Activated CD4-positive, alpha-beta memory T cell treated with anti-CD3 and anti-CD28 coated beads, Interleukin-2, amount 10 ng/mL, durations not matched to agents 7 days and 5 days (primary cell): ENCODE measurements at regions of chr1 and their contacts with region 1.

Region 1: GRCh38 chr1:202462342-202463076 is 114.0 kb downstream of the PPP1R12B start:
- DNase-seq: no peak
- H3K4me3 Mint-ChIP-seq: no peak overlapping the region
- H3K27ac Mint-ChIP-seq: no peak overlapping the region
- H3K4me1 Mint-ChIP-seq: no peaks in the 10 kb centered on the region
- H3K27me3 Mint-ChIP-seq: no peaks in the 10 kb centered on the region

Region 2: GRCh38 chr1:202105539-202106276 is 356.8 kb before region 1 on chr1:
- CTCF ChIA-PET with region 1: no interaction called
- POLR2A ChIA-PET with region 1: no interaction called
- DNase-seq: no peak
- H3K4me3 Mint-ChIP-seq: no peak overlapping the region
- H3K27ac Mint-ChIP-seq: no peak overlapping the region
- H3K4me1 Mint-ChIP-seq: no peaks in the 10 kb centered on the region
- H3K27me3 Mint-ChIP-seq: peaks cover 3% of the 10 kb centered on the region

Region 3: GRCh38 chr1:202713110-202713509 is 250.6 kb after region 1 on chr1:
- CTCF ChIA-PET with region 1: interaction called, 30 read pairs
- POLR2A ChIA-PET with region 1: no interaction called
- DNase-seq: no peak
- H3K4me3 Mint-ChIP-seq: no peak overlapping the region
- H3K27ac Mint-ChIP-seq: no peak overlapping the region
- H3K4me1 Mint-ChIP-seq: no peaks in the 10 kb centered on the region
- H3K27me3 Mint-ChIP-seq: peaks cover 61% of the 10 kb centered on the region